CD4-positive, alpha-beta memory T cell (primary cell): ENCODE measurements at regions of chrX and their contacts with region 1.

Region 1: GRCh38 chrX:71365876-71366673 is at the start of gene TAF1:
- DNase-seq: peak; percentile 85 to 96 (median 93)
- H3K4me3 ChIP-seq: peak within 1 kb of the TSS; percentile 52 to 82
- H3K4me3 Mint-ChIP-seq: peak within 1 kb of the TSS; percentile 86 to 100 (median 96)
- H3K27ac ChIP-seq: peak within 1 kb of the TSS; percentile 86
- H3K27ac Mint-ChIP-seq: peak within 1 kb of the TSS; percentile 97 to 99 (median 98)
- H3K4me1 ChIP-seq: peaks cover 31% of the 10 kb centered on the region
- H3K4me1 Mint-ChIP-seq: peaks cover 14 to 35% (median 24%) of the 10 kb centered on the region in 4 donors
- H3K27me3 ChIP-seq: no peaks in the 10 kb centered on the region
- H3K27me3 Mint-ChIP-seq: no peaks in the 10 kb centered on the region
- total RNA-seq, gene TAF1: 73.6 to 81.8 TPM

Region 2: GRCh38 chrX:71103110-71103983 is 262.7 kb before region 1 on chrX:
- CTCF ChIA-PET with region 1: no interaction called
- POLR2A ChIA-PET with region 1: interaction called, 10 read pairs
- intact Hi-C with region 1: no loop called
- DNase-seq: peak; percentile 58 to 71 (median 62)
- H3K4me3 ChIP-seq: peak overlapping the region; percentile 11 to 37
- H3K4me3 Mint-ChIP-seq: peak overlapping the region; percentile 79 to 90 (median 84)
- H3K27ac ChIP-seq: peak overlapping the region; percentile 66
- H3K27ac Mint-ChIP-seq: peak overlapping the region; percentile 91 to 97 (median 95)
- H3K4me1 ChIP-seq: peaks cover 90% of the 10 kb centered on the region
- H3K4me1 Mint-ChIP-seq: peaks cover 57 to 92% (median 82%) of the 10 kb centered on the region in 4 donors
- H3K27me3 ChIP-seq: no peaks in the 10 kb centered on the region
- H3K27me3 Mint-ChIP-seq: no peaks in the 10 kb centered on the region

Region 3: DNA sequence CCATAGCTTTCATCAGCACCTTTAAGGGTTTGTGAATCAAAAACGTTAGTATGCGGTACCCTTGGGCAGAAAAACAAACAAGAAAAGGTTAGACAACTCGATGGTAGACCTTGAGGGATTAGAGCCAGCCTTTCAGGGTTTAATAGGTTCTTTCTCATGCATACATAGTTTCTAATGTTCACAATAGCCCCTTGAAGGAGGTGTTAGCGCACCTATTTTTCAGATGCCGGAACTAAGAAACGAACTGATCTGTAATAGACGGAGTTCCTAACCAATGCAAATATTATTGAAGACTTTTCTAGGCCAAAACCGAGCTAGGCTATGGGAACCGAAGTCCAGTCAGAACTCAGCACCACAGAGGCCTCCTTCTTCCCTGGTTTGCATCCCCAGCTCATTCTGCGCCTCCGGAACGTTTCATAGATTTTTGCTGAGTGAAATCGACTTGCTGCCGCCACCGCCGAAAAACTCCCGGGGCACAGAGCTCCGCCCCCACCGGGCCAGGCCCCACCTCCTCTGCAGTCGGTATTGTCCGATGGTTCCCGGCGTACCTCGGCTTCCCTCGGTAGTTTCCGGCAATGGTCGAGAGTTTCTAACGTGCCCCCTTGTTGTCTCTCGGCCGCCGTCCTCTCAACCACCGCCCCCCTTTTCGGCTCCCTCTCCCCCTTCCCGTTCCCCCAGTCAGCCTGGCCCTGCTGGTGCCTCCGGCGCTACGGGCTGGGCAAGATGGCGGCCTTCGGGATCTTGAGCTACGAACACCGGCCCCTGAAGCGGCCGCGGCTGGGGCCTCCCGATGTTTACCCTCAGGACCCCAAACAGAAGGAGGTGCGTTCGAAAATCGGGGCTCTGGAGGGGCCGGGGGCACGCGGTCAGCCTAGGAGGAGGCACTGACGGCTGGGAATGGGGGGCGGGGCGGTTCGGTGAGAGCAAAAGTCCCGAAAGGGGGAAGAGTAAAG is 247.8 kb before region 1 on chrX and contains the start of gene MED12:
- CTCF ChIA-PET with region 1: no interaction called
- POLR2A ChIA-PET with region 1: interaction called, 14 read pairs
- intact Hi-C with region 1: no loop called
- DNase-seq: peak; percentile 75 to 83 (median 78)
- H3K4me3 ChIP-seq: peak within 1 kb of the TSS; percentile 36 to 69
- H3K4me3 Mint-ChIP-seq: peak within 1 kb of the TSS; percentile 84 to 90 (median 89)
- H3K27ac ChIP-seq: peak within 1 kb of the TSS; percentile 88
- H3K27ac Mint-ChIP-seq: peak within 1 kb of the TSS; percentile 90 to 95 (median 95)
- H3K4me1 ChIP-seq: peaks cover 26% of the 10 kb centered on the region
- H3K4me1 Mint-ChIP-seq: peaks cover 15 to 47% (median 29%) of the 10 kb centered on the region in 4 donors
- H3K27me3 ChIP-seq: no peaks in the 10 kb centered on the region
- H3K27me3 Mint-ChIP-seq: no peaks in the 10 kb centered on the region
- total RNA-seq, gene MED12: 84.4 to 89.9 TPM

Region 4: DNA sequence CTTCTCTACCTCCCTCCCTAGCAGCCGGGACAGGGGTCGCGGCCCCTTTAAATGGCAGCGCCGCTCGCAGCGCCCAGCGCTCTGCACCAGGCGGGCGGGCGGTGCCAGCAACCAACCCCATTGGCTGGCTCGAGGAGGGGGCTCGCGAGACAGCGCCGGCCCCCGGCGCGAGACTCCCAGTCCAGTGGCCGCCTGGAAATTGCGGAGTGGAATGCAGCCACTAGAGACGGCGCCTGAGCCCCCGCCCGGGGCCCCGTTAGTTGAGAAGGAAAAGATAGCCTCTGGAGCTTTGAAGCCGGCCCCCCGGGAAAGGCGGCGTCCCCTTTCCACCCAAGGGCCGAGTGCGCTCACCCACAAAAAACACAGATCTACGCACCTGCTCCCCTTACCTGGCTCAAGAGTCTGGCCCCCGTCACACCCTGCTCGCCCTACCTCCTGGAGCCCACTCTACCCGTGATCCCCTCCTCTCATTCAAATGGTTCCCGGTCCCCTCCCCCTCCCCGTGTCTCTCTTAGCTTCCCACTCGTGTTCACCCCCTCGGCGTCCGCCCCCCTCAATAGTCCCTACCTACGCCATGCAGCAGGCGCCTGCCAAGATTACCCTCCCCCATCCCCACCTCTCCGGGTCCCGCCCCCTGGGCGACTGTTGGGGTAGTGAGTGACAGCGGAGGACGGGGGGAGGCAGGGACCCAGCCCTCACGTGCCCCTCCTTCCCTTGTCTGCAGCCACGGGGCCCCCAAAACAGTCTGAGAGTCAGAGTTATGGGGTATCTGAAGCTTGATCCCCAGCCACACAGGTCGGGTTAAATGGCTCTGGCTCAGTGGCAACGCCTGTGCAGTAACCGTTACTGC is 111.8 kb before region 1 on chrX and contains the start of gene ZMYM3:
- CTCF ChIA-PET with region 1: interaction called, 6 read pairs
- POLR2A ChIA-PET with region 1: interaction called, 65 read pairs
- intact Hi-C with region 1: loop called (anchors 1 kb)
- DNase-seq: peak; percentile 75 to 86 (median 77)
- H3K4me3 ChIP-seq: peak within 1 kb of the TSS; percentile 52 to 81
- H3K4me3 Mint-ChIP-seq: peak within 1 kb of the TSS; percentile 90 to 98 (median 92)
- H3K27ac ChIP-seq: peak within 1 kb of the TSS; percentile 77
- H3K27ac Mint-ChIP-seq: peak within 1 kb of the TSS; percentile 93 to 97 (median 95)
- H3K4me1 ChIP-seq: peaks cover 25% of the 10 kb centered on the region
- H3K4me1 Mint-ChIP-seq: peaks cover 5 to 32% (median 13%) of the 10 kb centered on the region in 4 donors
- H3K27me3 ChIP-seq: no peaks in the 10 kb centered on the region
- H3K27me3 Mint-ChIP-seq: no peaks in the 10 kb centered on the region
- total RNA-seq, gene ZMYM3: 28.0 to 28.2 TPM

Region 5: DNA sequence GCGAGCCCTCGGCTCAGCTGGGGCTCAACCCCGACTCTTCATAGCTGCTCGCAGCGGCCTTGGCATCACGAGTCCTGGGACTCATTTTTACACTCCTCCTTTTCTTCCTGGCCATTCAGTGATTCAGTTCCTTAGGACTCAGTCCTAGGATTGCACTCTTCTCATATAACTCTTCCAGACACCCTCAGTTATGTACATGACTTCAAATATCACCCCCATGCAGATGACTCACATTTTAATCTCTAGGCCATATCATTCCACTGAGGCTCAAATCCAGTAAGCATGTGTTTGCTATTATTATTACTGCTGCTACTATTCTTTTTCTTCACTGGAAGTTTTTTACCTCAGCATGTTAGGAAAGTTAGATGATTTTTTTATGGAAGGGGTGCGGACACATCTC is 50.2 kb before region 1 on chrX:
- CTCF ChIA-PET with region 1: no interaction called
- POLR2A ChIA-PET with region 1: no interaction called
- intact Hi-C with region 1: no loop called
- DNase-seq: no peak
- H3K4me3 ChIP-seq: no peak overlapping the region
- H3K4me3 Mint-ChIP-seq: no peak overlapping the region
- H3K27ac ChIP-seq: no peak overlapping the region
- H3K27ac Mint-ChIP-seq: peak overlapping the region in 1 of 7 donors; percentile 42
- H3K4me1 ChIP-seq: no peaks in the 10 kb centered on the region
- H3K4me1 Mint-ChIP-seq: no peaks in the 10 kb centered on the region
- H3K27me3 ChIP-seq: no peaks in the 10 kb centered on the region
- H3K27me3 Mint-ChIP-seq: no peaks in the 10 kb centered on the region

Region 6: GRCh38 chrX:71652405-71652804 is 286.3 kb after region 1 on chrX:
- CTCF ChIA-PET with region 1: no interaction called
- POLR2A ChIA-PET with region 1: no interaction called
- intact Hi-C with region 1: loop called (anchors 5 kb)
- DNase-seq: peak in 4 of 5 donors; percentile 58 to 63 (median 62)
- H3K4me3 ChIP-seq: no peak overlapping the region
- H3K4me3 Mint-ChIP-seq: no peak overlapping the region
- H3K27ac ChIP-seq: no peak overlapping the region
- H3K27ac Mint-ChIP-seq: peak overlapping the region in 2 of 7 donors; percentile 48 to 57
- H3K4me1 ChIP-seq: peaks cover 8% of the 10 kb centered on the region
- H3K4me1 Mint-ChIP-seq: peaks cover 3 to 14% (median 11%) of the 10 kb centered on the region in 4 donors
- H3K27me3 ChIP-seq: no peaks in the 10 kb centered on the region
- H3K27me3 Mint-ChIP-seq: no peaks in the 10 kb centered on the region